ENCODE measurements at regions of chr14 and their contacts with region 1.

Region 1: DNA sequence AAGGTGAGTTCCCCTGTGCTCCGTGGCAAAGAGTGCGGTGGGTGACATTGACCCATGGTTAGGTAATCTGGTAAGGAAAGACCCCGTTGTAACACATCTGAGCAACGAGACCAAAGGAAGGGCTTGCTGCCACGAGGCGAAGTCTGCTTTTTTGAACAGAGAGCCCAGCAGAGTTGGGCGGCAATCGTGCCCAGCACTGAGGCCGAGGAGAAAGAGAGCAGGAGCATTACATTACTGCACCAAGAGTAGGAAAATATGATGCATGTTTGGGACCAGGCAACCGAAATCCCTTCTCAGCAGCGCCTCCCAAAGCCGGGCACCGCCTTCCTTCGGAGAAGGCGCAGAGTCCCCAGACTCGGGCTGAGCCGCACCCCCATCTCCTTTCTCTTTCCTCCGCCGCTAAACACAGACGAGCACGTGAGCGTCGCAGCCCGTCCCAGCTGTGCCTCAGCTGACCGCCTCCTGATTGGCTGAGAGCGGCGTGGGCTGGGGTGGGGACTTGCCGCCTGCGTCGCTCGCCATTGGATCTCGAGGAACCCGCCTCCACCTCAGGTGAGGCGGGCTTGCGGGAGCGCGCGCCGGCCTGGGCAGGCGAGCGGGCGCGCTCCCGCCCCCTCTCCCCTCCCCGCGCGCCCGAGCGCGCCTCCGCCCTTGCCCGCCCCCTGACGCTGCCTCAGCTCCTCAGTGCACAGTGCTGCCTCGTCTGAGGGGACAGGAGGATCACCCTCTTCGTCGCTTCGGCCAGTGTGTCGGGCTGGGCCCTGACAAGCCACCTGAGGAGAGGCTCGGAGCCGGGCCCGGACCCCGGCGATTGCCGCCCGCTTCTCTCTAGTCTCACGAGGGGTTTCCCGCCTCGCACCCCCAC is at the start of gene HIF1A:
- DNase-seq: peak; percentile 99
- ATAC-seq: peak; percentile 87
- H3K4me3 Mint-ChIP-seq: peak within 1 kb of the TSS; percentile 99
- H3K27ac Mint-ChIP-seq: peak within 1 kb of the TSS; percentile 98
- H3K4me1 Mint-ChIP-seq: peaks cover 50% of the 10 kb centered on the region
- H3K27me3 Mint-ChIP-seq: no peaks in the 10 kb centered on the region
- total RNA-seq, gene HIF1A: 196 to 329 TPM

Region 2: DNA sequence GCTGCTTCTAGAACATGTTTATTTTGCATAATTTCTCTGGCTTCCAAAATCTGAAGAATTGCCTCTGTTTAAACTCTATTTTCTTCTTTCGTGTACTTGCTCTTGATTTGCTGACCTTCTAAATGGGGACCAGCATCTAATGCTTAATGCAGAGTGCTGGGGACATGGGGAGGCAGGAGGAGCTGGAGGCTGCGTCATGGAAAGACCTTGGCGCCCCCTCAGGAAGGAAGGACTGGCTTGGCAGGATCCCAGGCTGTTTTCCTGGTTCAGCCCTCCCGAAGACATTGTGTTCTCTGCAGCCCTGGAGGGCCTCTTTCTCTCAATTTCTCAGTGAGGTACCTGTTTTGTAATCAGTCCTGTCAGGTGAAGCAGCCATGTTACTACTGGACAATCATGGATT is 368.2 kb before region 1 on chr14:
- CTCF ChIA-PET with region 1: no interaction called
- POLR2A ChIA-PET with region 1: no interaction called
- intact Hi-C with region 1: loop called (anchors 5 kb)
- DNase-seq: no peak
- ATAC-seq: no peak
- H3K4me3 Mint-ChIP-seq: peak overlapping the region; percentile 92
- H3K27ac Mint-ChIP-seq: peak overlapping the region; percentile 94
- H3K4me1 Mint-ChIP-seq: peaks cover 71% of the 10 kb centered on the region
- H3K27me3 Mint-ChIP-seq: no peaks in the 10 kb centered on the region

Region 3: GRCh38 chr14:61517911-61518384 is 177.1 kb before region 1 on chr14:
- CTCF ChIA-PET with region 1: no interaction called
- POLR2A ChIA-PET with region 1: no interaction called
- intact Hi-C with region 1: no loop called
- DNase-seq: no peak
- ATAC-seq: no peak
- H3K4me3 Mint-ChIP-seq: no peak overlapping the region
- H3K27ac Mint-ChIP-seq: peak overlapping the region; percentile 64
- H3K4me1 Mint-ChIP-seq: peaks cover 85% of the 10 kb centered on the region
- H3K27me3 Mint-ChIP-seq: no peaks in the 10 kb centered on the region

Region 4: GRCh38 chr14:61568572-61569131 is 126.4 kb before region 1 on chr14:
- CTCF ChIA-PET with region 1: interaction called, 3 read pairs
- POLR2A ChIA-PET with region 1: no interaction called
- intact Hi-C with region 1: loop called in 1 of 2 experiments (anchors 2 kb)
- DNase-seq: peak; percentile 77
- ATAC-seq: peak; percentile 50
- H3K4me3 Mint-ChIP-seq: peak overlapping the region; percentile 47
- H3K27ac Mint-ChIP-seq: peak overlapping the region; percentile 85
- H3K4me1 Mint-ChIP-seq: peaks cover 80% of the 10 kb centered on the region
- H3K27me3 Mint-ChIP-seq: peaks cover 3% of the 10 kb centered on the region

Region 5: DNA sequence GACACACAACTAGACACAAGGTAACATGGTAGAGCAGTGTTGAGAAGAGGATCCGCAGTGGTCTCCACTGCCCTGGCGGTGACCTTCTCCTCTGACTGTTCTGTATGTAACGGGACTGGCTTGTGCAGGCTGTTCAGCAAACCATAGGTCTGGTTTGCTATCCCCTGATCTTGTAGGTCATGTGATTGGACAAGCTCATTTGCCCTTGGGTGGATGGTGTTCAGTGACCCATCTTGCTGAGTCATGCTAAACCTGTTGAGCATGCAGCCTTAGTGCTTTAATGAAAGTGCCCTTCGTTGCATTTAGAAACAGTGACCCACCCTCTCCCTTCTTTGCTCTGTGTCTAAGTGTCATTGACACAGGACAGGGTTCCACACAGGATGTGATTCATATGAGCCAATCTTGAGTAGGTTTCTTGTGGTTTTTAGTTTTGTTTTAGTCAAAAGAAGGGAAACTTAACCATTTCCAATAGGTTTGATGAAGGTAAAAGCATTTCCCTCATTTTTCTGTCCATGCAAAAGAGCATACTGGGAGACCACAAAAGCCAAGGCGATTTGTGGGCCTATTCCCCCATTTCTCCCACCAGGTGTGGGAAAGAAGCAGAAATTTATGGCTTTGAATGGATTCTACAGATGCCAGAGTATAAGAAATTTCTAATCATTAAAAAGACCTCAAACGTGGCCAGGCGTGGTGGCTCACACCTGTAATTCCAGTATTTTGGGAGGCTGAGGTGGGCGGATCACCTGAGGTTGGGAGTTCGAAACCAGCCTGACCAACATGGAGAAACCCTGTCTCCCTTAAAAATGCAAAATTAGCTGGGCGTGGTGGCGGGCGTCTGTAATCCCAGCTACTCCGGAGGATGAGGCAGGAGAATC is 32.4 kb before region 1 on chr14:
- CTCF ChIA-PET with region 1: interaction called, 4 read pairs
- POLR2A ChIA-PET with region 1: interaction called, 8 read pairs
- intact Hi-C with region 1: loop called (anchors 1 kb)
- DNase-seq: peak; percentile 73
- ATAC-seq: peak; percentile 84
- H3K4me3 Mint-ChIP-seq: peak overlapping the region; percentile 46
- H3K27ac Mint-ChIP-seq: peak overlapping the region; percentile 91
- H3K4me1 Mint-ChIP-seq: peaks cover 67% of the 10 kb centered on the region
- H3K27me3 Mint-ChIP-seq: no peaks in the 10 kb centered on the region

Region 6: GRCh38 chr14:61710853-61711817 is 16.1 kb after region 1 on chr14:
- CTCF ChIA-PET with region 1: interaction called, 5 read pairs
- POLR2A ChIA-PET with region 1: interaction called, 3 read pairs
- intact Hi-C with region 1: loop called in 1 of 2 experiments (anchors 2 kb)
- DNase-seq: no peak
- ATAC-seq: peak; percentile 27
- H3K4me3 Mint-ChIP-seq: peak overlapping the region; percentile 39
- H3K27ac Mint-ChIP-seq: peak overlapping the region; percentile 53
- H3K4me1 Mint-ChIP-seq: peaks cover 89% of the 10 kb centered on the region
- H3K27me3 Mint-ChIP-seq: no peaks in the 10 kb centered on the region

Region 7: DNA sequence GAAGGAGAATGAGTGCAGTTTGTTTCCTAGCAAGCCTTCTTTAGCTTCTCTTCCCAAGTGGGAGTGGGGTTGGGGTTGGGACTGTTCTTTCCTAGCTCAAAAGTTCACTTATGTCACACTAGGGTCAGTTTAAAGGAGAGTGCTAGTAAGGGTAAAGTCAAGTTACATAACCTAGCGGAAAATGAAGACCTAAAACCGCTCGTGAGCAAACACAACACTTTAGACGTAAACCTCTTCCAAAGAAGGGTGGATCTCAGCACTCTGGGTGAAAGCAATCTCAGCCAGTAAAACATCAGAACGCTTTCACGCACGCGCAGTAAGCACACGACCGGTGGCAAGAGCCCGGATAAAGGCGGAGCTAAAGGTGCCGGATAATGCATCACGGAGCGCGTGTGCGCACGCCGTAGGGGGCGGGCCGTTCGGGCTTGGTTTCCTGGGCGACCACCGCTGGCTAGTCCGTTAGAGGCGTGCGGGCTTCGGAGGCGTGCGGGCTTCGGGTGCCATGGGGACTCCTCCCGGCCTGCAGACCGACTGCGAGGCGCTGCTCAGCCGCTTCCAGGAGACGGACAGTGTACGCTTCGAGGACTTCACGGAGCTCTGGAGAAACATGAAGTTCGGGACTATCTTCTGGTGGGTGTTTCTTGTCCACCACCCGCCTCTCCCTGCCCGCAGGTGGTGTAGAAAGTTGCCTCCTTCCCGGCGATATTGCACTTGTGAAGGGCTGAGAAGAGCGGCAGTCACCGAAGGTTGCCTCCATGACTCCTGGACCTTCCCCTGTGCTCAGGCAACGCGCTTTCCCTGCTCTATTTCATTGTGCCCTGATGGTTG is 67.1 kb after region 1 on chr14 and contains the start of gene SNAPC1:
- CTCF ChIA-PET with region 1: no interaction called
- POLR2A ChIA-PET with region 1: interaction called, 6 read pairs
- intact Hi-C with region 1: loop called in 1 of 2 experiments (anchors 1 kb)
- DNase-seq: peak; percentile 98
- ATAC-seq: peak; percentile 98
- H3K4me3 Mint-ChIP-seq: peak within 1 kb of the TSS; percentile 95
- H3K27ac Mint-ChIP-seq: peak within 1 kb of the TSS; percentile 96
- H3K4me1 Mint-ChIP-seq: peaks cover 35% of the 10 kb centered on the region
- H3K27me3 Mint-ChIP-seq: no peaks in the 10 kb centered on the region
- total RNA-seq, gene SNAPC1: 10.5 to 11.2 TPM

Region 8: DNA sequence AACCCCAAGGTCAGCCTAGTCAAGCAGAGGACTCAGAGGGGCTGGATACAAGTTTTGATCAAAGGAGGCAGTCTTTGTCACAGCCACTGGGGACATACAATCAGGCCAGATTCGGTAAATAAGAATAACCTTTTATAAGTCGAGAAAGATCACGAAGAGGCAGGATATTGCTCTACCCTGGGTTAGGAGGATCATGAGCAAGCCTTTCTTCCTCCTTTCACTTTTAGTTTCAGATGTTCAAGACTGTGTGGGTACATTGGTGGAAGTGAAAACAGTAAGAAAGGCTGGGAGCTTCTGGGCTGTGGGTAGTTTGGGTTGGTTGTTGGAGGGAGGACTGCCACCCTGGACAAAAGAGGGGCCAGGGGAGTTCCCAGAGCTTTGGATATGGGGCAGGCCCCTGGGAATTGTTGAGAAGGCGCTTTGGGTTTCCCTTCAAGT is 194.9 kb after region 1 on chr14:
- CTCF ChIA-PET with region 1: no interaction called
- POLR2A ChIA-PET with region 1: no interaction called
- intact Hi-C with region 1: no loop called
- DNase-seq: peak; percentile 49
- ATAC-seq: peak; percentile 99
- H3K4me3 Mint-ChIP-seq: peak overlapping the region; percentile 22
- H3K27ac Mint-ChIP-seq: peak overlapping the region; percentile 75
- H3K4me1 Mint-ChIP-seq: peaks cover 17% of the 10 kb centered on the region
- H3K27me3 Mint-ChIP-seq: peaks cover 5% of the 10 kb centered on the region

Region 9: DNA sequence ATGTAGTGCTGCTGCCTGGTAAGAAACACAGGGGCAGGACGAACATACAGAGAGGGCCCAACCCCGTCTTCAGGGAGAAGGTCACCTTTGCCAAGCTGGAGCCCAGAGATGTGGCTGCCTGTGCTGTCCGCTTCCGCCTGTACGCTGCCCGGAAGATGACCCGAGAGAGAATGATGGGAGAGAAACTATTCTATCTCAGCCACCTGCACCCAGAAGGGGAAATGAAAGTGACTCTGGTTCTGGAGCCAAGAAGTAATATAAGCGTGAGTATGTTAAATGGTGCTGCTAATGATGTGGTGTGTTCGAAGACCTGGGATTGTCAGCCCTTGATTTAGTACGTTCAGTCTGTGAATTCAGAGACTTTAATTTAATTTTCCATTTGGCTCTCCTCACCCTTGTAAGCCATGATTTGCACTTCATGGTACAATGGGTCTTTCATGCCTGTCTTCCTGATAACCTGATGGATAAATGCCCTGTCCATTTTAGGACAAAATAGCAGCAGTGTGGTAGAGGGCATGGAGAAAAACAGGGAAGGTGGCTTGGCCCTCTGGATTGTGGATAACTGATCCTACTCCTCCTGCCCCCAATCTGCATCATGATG is 386.1 kb after region 1 on chr14:
- CTCF ChIA-PET with region 1: no interaction called
- POLR2A ChIA-PET with region 1: no interaction called
- intact Hi-C with region 1: no loop called
- DNase-seq: no peak
- ATAC-seq: no peak
- H3K4me3 Mint-ChIP-seq: no peak overlapping the region
- H3K27ac Mint-ChIP-seq: no peak overlapping the region
- H3K4me1 Mint-ChIP-seq: peaks cover 36% of the 10 kb centered on the region
- H3K27me3 Mint-ChIP-seq: peaks cover 2% of the 10 kb centered on the region